ENCODE measurements at regions of chr11 and their contacts with region 1.

Region 1: GRCh38 chr11:116871248-116871647 is 33.8 kb upstream of the APOA1 start:
- DNase-seq: peak in 1 of 2 donors; percentile 44
- ATAC-seq: peak in 6 of 8 donors; percentile 40 to 75 (median 51)
- H3K4me3 ChIP-seq: no peak overlapping the region
- H3K27ac ChIP-seq: peak overlapping the region in 9 of 10 donors; percentile 9 to 73 (median 58)
- H3K4me1 ChIP-seq: peaks cover 0 to 89% (median 30%) of the 10 kb centered on the region in 9 donors
- H3K27me3 ChIP-seq: no peaks in the 10 kb centered on the region
- CTCF ChIP-seq: no peak

Region 2: GRCh38 chr11:116579031-116579653 is 292.1 kb before region 1 on chr11:
- intact Hi-C with region 1: no loop called
- DNase-seq: peak; percentile 23 to 52
- ATAC-seq: peak in 5 of 8 donors; percentile 56 to 87 (median 63)
- H3K4me3 ChIP-seq: no peak overlapping the region
- H3K27ac ChIP-seq: no peak overlapping the region
- H3K4me1 ChIP-seq: peaks cover 0 to 17% (median 10%) of the 10 kb centered on the region in 9 donors
- H3K27me3 ChIP-seq: peaks cover 13 to 65% (median 53%) of the 10 kb centered on the region in 7 donors
- CTCF ChIP-seq: no peak

Region 3: DNA sequence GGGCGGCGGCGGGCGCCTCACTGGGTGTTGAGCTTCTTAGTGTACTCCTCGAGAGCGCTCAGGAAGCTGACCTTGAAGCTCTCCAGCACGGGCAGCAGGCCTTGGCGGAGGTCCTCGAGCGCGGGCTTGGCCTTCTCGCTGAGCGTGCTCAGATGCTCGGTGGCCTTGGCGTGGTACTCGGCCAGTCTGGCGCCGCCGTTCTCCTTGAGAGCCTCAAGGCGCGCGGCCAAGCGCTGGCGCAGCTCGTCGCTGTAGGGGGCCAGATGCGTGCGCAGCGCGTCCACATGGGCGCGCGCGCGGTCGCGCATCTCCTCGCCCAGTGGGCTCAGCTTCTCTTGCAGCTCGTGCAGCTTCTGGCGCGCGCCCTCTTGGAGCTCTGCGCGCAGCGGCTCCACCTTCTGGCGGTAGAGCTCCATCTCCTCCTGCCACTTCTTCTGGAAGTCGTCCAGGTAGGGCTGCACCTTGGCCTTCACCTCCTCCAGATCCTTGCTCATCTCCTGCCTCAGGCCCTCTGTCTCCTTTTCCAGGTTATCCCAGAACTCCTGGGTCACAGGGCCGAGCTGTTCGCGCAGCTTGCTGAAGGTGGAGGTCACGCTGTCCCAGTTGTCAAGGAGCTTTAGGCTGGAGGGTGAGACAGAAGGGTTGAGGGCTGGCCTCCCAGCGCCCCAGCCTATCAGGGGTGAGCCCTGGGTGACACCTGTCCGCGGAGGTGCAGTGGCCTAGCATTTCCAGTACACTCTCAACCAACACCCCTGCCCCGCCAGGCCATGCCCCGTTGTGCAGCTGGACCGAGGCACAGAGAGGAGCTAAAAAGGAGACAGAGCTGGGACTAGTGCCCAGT is 35.2 kb before region 1 on chr11:
- intact Hi-C with region 1: loop called in 2 of 10 experiments (anchors 5 kb)
- DNase-seq: peak; percentile 83 to 91
- ATAC-seq: peak; percentile 81 to 90 (median 86)
- H3K4me3 ChIP-seq: peak overlapping the region in 9 of 10 donors; percentile 3 to 57 (median 46)
- H3K27ac ChIP-seq: peak overlapping the region; percentile 36 to 88 (median 83)
- H3K4me1 ChIP-seq: peaks cover 11 to 63% (median 38%) of the 10 kb centered on the region in 9 donors
- H3K27me3 ChIP-seq: no peaks in the 10 kb centered on the region
- CTCF ChIP-seq: peak; percentile 18 to 81 (median 57)

Measured in heart right ventricle (tissue), 16 donors.